ENCODE measurements at regions of chr1 and their contacts with region 1.

Region 1: GRCh38 chr1:67149179-67149770 is 14.5 kb upstream of the C1orf141 start:
- DNase-seq: peak; percentile 76
- H3K4me3 Mint-ChIP-seq: peak overlapping the region; percentile 16
- H3K27ac Mint-ChIP-seq: no peak overlapping the region
- H3K4me1 Mint-ChIP-seq: peaks cover 18% of the 10 kb centered on the region
- H3K27me3 Mint-ChIP-seq: peaks cover 45% of the 10 kb centered on the region
- CTCF ChIP-seq: peak; percentile 82

Region 2: GRCh38 chr1:66929999-66930822 is 219.1 kb before region 1 on chr1:
- CTCF ChIA-PET with region 1: interaction called, 3 read pairs
- intact Hi-C with region 1: loop called (anchors 1 kb)
- DNase-seq: peak; percentile 98
- H3K4me3 Mint-ChIP-seq: peak overlapping the region; percentile 77
- H3K27ac Mint-ChIP-seq: peak overlapping the region; percentile 85
- H3K4me1 Mint-ChIP-seq: no peaks in the 10 kb centered on the region
- H3K27me3 Mint-ChIP-seq: no peaks in the 10 kb centered on the region
- CTCF ChIP-seq: peak; percentile 28

Region 3: GRCh38 chr1:66981679-66982078 is 167.6 kb before region 1 on chr1:
- CTCF ChIA-PET with region 1: no interaction called
- intact Hi-C with region 1: loop called (anchors 5 kb)
- DNase-seq: no peak
- H3K4me3 Mint-ChIP-seq: no peak overlapping the region
- H3K27ac Mint-ChIP-seq: no peak overlapping the region
- H3K4me1 Mint-ChIP-seq: peaks cover 14% of the 10 kb centered on the region
- H3K27me3 Mint-ChIP-seq: no peaks in the 10 kb centered on the region
- CTCF ChIP-seq: no peak

Region 4: DNA sequence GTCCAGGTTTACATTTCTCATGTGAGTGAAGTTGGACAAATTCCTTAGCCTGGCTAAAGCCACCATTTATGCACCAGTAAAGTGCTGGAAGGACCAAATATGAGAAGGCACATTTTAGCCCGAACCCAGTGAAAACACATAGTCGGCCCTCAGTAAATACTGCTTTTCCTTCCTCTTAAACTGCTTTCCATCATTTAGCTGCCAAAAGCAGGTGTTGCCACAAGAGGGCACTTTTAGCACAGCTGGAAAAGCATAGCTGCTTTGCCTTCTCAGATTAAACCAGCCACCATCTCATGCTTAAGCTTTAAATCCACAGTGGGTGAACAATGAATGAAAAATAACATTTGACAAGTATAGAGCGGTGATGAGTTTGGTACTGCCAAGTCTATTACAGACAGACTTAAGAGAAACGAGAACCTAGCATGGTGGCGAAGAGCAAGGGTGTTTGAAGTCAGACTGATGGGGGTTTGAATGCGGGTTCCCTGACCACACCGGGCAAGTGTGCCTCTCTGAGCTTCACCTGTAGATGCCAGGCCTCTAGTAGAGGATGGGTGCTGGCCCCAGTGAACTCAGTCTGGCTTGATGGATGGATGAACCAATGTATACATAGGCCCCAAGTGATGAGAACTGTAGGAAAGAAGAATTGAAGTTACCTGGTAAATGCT is 153.1 kb before region 1 on chr1:
- CTCF ChIA-PET with region 1: interaction called, 77 read pairs
- intact Hi-C with region 1: loop called (anchors 1 kb)
- DNase-seq: peak; percentile 59
- H3K4me3 Mint-ChIP-seq: no peak overlapping the region
- H3K27ac Mint-ChIP-seq: no peak overlapping the region
- H3K4me1 Mint-ChIP-seq: no peaks in the 10 kb centered on the region
- H3K27me3 Mint-ChIP-seq: no peaks in the 10 kb centered on the region
- CTCF ChIP-seq: peak; percentile 65

Region 5: GRCh38 chr1:67100833-67101232 is 48.4 kb before region 1 on chr1:
- CTCF ChIA-PET with region 1: no interaction called
- intact Hi-C with region 1: no loop called
- DNase-seq: no peak
- H3K4me3 Mint-ChIP-seq: no peak overlapping the region
- H3K27ac Mint-ChIP-seq: no peak overlapping the region
- H3K4me1 Mint-ChIP-seq: peaks cover 11% of the 10 kb centered on the region
- H3K27me3 Mint-ChIP-seq: no peaks in the 10 kb centered on the region
- CTCF ChIP-seq: no peak

Region 6: DNA sequence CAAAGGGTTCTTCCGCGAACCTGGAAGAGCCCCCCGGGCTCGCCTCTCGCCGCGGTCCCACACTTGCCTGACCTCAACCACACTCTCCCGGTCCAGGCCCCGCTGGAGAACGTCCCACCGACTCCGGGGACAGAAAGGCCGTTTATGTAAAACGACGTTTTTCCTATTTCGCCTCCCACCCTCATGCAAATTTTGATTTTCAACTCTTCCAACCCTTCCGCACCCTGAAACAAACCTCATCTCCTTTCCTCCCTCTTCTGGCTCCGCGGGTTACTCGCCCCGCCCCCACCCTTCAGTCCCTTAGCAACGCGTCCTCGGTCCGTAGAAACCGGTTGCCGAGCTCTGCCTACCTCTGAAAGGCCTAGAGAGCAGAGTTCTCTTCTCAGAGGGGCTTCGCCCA is 14.6 kb before region 1 on chr1 and contains the start of gene C1orf141:
- CTCF ChIA-PET with region 1: interaction called, 12 read pairs
- intact Hi-C with region 1: no loop called
- DNase-seq: no peak
- H3K4me3 Mint-ChIP-seq: no peak within 1 kb of the TSS
- H3K27ac Mint-ChIP-seq: no peak within 1 kb of the TSS
- H3K4me1 Mint-ChIP-seq: peaks cover 26% of the 10 kb centered on the region
- H3K27me3 Mint-ChIP-seq: no peaks in the 10 kb centered on the region
- CTCF ChIP-seq: no peak
- total RNA-seq, gene C1orf141: not detected in 2 replicates

Region 7: DNA sequence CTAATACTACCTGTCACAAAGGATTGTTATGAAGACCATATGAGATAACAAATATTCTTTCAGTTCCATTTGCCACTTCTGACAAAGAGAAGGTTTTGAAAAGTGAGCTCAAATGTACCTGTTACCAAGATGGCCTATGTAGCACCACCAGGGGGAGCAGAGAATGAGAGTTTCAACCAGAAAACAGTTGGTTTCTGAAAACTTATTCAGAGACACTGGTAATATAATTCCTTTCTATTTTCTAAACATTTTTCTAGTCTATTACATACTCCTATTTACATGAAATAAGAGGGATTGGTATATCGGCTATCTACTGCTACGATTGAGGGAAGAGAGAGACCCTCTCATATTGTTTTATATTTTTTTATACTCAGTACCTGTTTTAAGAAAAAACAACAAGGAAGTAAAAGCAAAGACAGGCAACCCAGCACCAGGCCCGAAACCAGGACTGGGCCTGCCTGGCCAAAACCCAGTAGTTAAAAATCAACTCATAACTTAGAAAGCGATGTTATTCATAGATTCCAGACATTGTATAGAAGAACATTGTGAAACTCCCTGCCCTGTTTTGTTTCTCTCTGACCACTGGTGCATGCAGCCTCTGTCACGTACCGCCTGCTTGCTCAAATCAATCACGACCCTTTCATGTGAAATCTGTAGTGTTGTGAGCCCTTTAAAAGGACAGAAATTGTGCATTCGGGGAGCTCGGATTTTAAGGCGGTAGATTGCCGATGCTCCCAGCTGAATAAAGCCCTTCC is 65.3 kb after region 1 on chr1:
- CTCF ChIA-PET with region 1: interaction called, 13 read pairs
- intact Hi-C with region 1: no loop called
- DNase-seq: peak; percentile 64
- H3K4me3 Mint-ChIP-seq: no peak overlapping the region
- H3K27ac Mint-ChIP-seq: no peak overlapping the region
- H3K4me1 Mint-ChIP-seq: no peaks in the 10 kb centered on the region
- H3K27me3 Mint-ChIP-seq: peaks cover 4% of the 10 kb centered on the region
- CTCF ChIP-seq: no peak

Measured in Calu3 (cell line).